A549 (cell line): ENCODE measurements at regions of chr2 and their contacts with region 1.

Region 1: DNA sequence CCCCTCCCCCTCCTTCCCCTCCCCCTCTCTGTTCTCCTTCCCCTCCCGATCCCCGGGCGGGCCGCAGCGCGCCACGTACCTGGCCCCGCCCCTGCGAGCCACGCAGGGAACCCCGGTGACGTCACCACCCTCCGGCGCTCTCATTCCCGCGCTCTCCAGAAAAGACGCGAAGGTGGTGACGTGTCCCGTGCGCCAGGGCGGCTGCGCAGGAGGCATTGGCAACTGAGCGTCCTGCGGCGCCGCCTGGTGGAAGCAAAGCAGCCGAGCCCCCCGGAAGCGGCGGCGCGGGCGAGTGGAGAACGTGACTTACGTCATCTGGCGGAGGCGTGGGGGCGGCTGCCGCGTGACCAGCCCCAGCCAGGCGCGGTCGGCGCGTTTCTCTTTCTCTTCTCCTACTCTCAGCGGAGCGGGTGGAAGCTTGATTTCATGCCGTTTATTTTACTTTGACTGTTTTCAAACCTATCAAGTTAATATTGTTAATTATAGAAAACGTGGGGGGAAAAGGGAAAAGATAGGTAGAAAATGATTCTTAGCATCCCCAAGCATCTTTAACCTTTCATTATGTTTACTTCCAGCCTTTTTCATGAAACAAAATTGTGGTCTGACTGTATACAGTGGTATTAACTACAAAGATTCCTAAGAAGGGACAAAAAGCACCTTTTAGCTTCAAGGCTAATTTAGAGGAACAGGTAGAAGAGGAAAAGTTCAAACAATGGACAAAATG is 48.1 kb downstream of the C2orf42 start:
- DNase-seq: peak; percentile 94 to 100
- ATAC-seq: peak; percentile 74 to 77
- H3K4me3 ChIP-seq: peak overlapping the region; percentile 63
- H3K27ac ChIP-seq: peak overlapping the region; percentile 96 to 100
- H3K4me1 ChIP-seq: peaks cover 23% of the 10 kb centered on the region
- CTCF ChIP-seq: peak; percentile 99
- EP300 ChIP-seq: peak; percentile 25 to 43; a peak in 1 of 5 replicates
- POLR2A ChIP-seq: peak; percentile 79
- RAD21 ChIP-seq: peak; percentile 98 to 100

Region 2: GRCh38 chr2:70086838-70087701 is 55.7 kb before region 1 on chr2 and contains the start of gene PCBP1:
- CTCF ChIA-PET with region 1: interaction called, 33 read pairs
- POLR2A ChIA-PET with region 1: interaction called, 22 read pairs
- DNase-seq: peak; percentile 96 to 97
- ATAC-seq: peak; percentile 62 to 64
- H3K4me3 ChIP-seq: peak within 1 kb of the TSS; percentile 96
- H3K27ac ChIP-seq: peak within 1 kb of the TSS; percentile 96 to 100
- H3K4me1 ChIP-seq: peaks cover 30% of the 10 kb centered on the region
- CTCF ChIP-seq: no peak
- EP300 ChIP-seq: peak in 1 of 2 experiments; percentile 48; a peak in 1 of 5 replicates
- POLR2A ChIP-seq: peak; percentile 57
- RAD21 ChIP-seq: peak in 1 of 2 experiments; percentile 0; a peak in 1 of 5 replicates
- polyA plus RNA-seq, gene PCBP1: 86.8 and 134 TPM in 2 replicates

Region 3: GRCh38 chr2:70132244-70133126 is 10.3 kb before region 1 on chr2:
- CTCF ChIA-PET with region 1: interaction called, 25 read pairs
- POLR2A ChIA-PET with region 1: interaction called, 8 read pairs
- DNase-seq: peak; percentile 53 to 68
- ATAC-seq: peak; percentile 63 to 66
- H3K4me3 ChIP-seq: peak overlapping the region; percentile 20
- H3K27ac ChIP-seq: peak overlapping the region; percentile 90
- H3K4me1 ChIP-seq: peaks cover 51% of the 10 kb centered on the region
- CTCF ChIP-seq: no peak
- EP300 ChIP-seq: no peak
- POLR2A ChIP-seq: no peak
- RAD21 ChIP-seq: no peak

Region 4: DNA sequence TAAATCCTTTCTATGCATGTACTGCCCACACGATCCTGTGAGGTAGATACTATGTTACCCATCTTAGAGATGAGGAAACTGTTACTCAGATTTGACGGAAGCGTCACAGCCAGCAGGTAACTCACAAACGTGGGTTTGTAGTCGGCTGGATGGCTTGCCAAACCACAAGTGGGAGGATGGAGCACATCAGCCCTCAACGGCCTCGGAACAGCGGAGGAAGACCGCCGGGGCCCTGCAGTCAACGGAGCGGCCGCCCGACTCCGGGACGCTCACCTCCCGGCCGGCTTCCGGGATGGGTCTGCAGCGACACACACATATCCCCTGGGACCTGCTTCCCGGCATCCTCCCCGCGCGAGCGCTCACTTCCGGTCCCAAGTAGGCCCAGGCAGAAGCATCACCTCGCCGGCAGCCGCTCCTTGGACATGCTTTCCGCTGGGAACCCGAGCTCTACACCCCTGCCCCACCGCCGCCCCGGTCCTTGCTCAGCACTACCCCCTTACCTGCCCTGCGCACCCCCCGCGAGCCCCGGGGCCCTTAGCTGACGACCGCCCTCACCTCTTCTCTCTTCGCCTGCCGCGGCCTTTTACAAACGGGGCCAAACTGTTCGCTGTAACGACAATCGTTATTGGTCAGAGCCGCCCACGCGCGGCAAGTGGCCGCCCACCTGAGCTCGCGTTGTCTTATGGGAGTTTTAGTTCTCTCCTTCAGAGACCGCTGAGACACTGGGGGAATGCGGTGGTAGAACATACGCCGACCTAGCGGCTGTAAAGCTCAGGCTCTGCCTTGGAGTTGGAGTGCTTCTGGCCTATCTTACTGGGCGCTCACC is 47.9 kb after region 1 on chr2 and contains the start of gene C2orf42:
- CTCF ChIA-PET with region 1: interaction called, 3 read pairs
- POLR2A ChIA-PET with region 1: interaction called, 11 read pairs
- DNase-seq: peak; percentile 99 to 100
- ATAC-seq: peak; percentile 97 to 98
- H3K4me3 ChIP-seq: peak within 1 kb of the TSS; percentile 75
- H3K27ac ChIP-seq: peak within 1 kb of the TSS; percentile 92 to 97
- H3K4me1 ChIP-seq: peaks cover 14% of the 10 kb centered on the region
- CTCF ChIP-seq: no peak
- EP300 ChIP-seq: no peak
- POLR2A ChIP-seq: peak; percentile 99
- RAD21 ChIP-seq: peak in 1 of 2 experiments; percentile 20; a peak in 1 of 5 replicates
- polyA plus RNA-seq, gene C2orf42: 10.4 and 14.8 TPM in 2 replicates